Activated CD4-positive, alpha-beta memory T cell treated with anti-CD3 and anti-CD28 coated beads, Interleukin-2, amount 10 ng/mL, durations not matched to agents 7 days and 5 days (primary cell): ENCODE measurements at regions of chr9 and their contacts with region 1.

Region 1: DNA sequence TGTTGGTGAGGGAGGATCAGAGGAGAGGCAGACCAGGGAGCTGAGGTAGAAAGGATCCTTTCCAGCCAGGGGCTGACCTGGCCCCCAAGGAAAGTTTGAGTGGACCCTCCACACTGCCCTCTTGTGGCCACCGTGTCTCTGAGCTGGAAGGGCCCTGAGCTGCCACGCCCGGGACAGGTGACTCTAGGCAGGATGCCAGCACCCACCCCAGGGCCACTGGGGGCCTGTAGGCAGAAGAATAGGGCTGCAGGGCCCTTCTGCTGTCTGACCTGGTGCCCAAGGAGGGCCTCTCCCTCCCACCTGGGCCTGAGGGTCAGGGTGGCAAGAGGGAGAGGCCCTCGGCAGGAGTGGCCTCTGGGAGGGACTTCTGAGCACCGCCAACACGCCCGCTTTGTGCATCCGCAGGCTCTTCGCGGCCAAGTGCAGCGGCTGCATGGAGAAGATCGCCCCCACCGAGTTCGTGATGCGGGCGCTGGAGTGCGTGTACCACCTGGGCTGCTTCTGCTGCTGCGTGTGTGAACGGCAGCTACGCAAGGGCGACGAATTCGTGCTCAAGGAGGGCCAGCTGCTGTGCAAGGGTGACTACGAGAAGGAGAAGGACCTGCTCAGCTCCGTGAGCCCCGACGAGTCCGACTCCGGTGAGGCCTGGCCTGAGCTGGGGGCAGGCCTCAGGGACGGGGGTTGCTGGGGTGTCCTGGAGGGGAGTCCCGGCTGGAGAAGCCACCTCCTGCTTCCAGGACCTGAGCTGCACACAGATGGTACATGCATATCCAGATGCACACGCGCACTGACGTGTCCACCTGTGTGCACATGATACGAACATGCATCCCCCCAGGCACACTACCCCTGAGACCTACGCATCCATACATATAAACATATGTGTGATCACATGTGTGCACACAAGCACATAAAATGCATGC is 77.0 kb downstream of the LMX1B start:
- DNase-seq: peak; percentile 58
- H3K4me3 Mint-ChIP-seq: no peak overlapping the region
- H3K27ac Mint-ChIP-seq: no peak overlapping the region
- H3K4me1 Mint-ChIP-seq: no peaks in the 10 kb centered on the region
- H3K27me3 Mint-ChIP-seq: peaks cover 18% of the 10 kb centered on the region

Region 2: DNA sequence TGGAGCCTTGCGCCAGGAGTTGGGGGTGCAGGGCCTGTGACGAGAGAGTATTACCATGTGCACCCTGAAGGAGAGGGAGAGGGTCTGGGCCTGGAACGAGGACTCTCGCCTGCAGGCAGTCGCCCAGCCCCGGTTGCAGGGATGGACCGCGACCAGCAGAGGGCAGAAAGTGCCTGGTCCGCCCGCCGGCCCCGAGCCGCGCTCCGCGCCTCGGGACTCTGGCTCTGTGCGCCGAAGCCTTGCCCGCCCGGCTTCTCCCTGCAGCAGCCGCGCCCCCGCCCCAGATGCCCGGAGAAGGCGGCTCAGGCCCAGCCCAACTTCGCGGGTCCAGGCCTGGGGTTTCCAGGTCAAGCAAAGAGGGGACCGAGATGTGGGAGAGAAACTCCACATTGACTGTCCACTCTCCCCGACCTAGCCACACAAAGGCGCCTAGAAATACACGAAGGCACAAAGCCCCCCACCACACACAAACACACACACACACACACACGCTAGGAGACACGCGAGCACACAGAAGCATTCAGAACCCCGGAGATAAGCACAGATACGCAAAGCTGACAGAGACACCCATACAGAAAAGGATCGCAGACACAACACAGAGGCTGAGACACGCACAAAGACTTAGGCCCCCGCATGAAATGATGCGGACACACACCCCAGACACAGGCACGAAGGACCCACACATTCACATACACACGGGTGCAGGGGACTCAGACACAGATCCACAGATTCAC is 78.9 kb before region 1 on chr9:
- CTCF ChIA-PET with region 1: interaction called, 16 read pairs
- POLR2A ChIA-PET with region 1: interaction called, 3 read pairs
- DNase-seq: peak; percentile 73
- H3K4me3 Mint-ChIP-seq: peak overlapping the region; percentile 3
- H3K27ac Mint-ChIP-seq: peak overlapping the region; percentile 3
- H3K4me1 Mint-ChIP-seq: peaks cover 22% of the 10 kb centered on the region
- H3K27me3 Mint-ChIP-seq: peaks cover 73% of the 10 kb centered on the region

Region 3: DNA sequence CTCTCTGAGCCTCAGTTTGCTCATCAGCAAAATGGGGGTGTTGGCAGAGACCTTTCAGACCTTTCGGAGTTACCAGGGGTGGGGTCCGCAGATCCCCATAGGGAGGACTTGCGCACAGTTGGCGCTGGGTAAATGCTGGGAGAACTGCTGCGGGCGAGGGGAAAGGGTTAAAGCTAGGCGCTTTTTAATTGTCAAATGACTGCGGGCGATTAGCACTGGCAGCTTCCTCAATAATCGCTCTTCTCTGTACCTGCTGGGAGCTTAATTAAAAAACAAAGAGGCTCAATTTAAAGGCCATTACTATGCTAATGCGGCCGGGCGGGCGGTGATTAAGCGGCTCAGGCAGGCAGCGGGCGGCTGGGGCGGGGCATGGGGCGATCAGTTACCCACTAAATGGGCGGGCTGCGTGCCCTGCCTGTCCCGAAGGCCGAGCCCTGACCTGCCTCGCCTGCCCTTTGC is 14.0 kb before region 1 on chr9:
- CTCF ChIA-PET with region 1: interaction called, 20 read pairs
- POLR2A ChIA-PET with region 1: interaction called, 3 read pairs
- DNase-seq: no peak
- H3K4me3 Mint-ChIP-seq: no peak overlapping the region
- H3K27ac Mint-ChIP-seq: no peak overlapping the region
- H3K4me1 Mint-ChIP-seq: peaks cover 4% of the 10 kb centered on the region
- H3K27me3 Mint-ChIP-seq: peaks cover 80% of the 10 kb centered on the region